Psoas muscle (tissue), 8 donors: ENCODE measurements at regions of chr3 and their contacts with region 1.

Region 1: DNA sequence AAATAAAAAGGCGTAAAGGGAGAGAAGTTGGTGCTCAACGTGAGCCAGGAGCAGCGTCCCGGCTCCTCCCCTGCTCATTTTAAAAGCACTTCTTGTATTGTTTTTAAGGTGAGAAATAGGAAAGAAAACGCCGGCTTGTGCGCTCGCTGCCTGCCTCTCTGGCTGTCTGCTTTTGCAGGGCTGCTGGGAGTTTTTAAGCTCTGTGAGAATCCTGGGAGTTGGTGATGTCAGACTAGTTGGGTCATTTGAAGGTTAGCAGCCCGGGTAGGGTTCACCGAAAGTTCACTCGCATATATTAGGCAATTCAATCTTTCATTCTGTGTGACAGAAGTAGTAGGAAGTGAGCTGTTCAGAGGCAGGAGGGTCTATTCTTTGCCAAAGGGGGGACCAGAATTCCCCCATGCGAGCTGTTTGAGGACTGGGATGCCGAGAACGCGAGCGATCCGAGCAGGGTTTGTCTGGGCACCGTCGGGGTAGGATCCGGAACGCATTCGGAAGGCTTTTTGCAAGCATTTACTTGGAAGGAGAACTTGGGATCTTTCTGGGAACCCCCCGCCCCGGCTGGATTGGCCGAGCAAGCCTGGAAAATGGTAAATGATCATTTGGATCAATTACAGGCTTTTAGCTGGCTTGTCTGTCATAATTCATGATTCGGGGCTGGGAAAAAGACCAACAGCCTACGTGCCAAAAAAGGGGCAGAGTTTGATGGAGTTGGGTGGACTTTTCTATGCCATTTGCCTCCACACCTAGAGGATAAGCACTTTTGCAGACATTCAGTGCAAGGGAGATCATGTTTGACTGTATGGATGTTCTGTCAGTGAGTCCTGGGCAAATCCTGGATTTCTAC is at the start of gene RARB:
- DNase-seq: peak; percentile 53 to 67
- ATAC-seq: peak; percentile 86 to 92 (median 90)
- H3K4me3 ChIP-seq: peak within 1 kb of the TSS; percentile 73
- H3K27ac ChIP-seq: peak within 1 kb of the TSS; percentile 86
- H3K4me1 ChIP-seq: peaks cover 20% of the 10 kb centered on the region
- H3K27me3 ChIP-seq: no peaks in the 10 kb centered on the region
- CTCF ChIP-seq: no peak
- total RNA-seq, gene RARB: 1.3 to 5.4 (median 1.9) TPM

Region 2: GRCh38 chr3:24963762-24964625 is 464.2 kb before region 1 on chr3:
- intact Hi-C with region 1: loop called in 1 of 2 experiments (anchors 10 kb)
- DNase-seq: no peak
- ATAC-seq: no peak
- H3K4me3 ChIP-seq: no peak overlapping the region
- H3K27ac ChIP-seq: no peak overlapping the region
- H3K4me1 ChIP-seq: no peaks in the 10 kb centered on the region
- H3K27me3 ChIP-seq: no peaks in the 10 kb centered on the region
- CTCF ChIP-seq: peak; percentile 51

Region 3: GRCh38 chr3:25214034-25214433 is 214.1 kb before region 1 on chr3:
- intact Hi-C with region 1: no loop called
- DNase-seq: no peak
- ATAC-seq: no peak
- H3K4me3 ChIP-seq: no peak overlapping the region
- H3K27ac ChIP-seq: no peak overlapping the region
- H3K4me1 ChIP-seq: no peaks in the 10 kb centered on the region
- H3K27me3 ChIP-seq: no peaks in the 10 kb centered on the region
- CTCF ChIP-seq: no peak